Calu3 (cell line): ENCODE measurements at regions of chr19 and their contacts with region 1.

Region 1: GRCh38 chr19:51040151-51040550 is 5.3 kb upstream of the KLK12 start:
- DNase-seq: no peak
- H3K4me3 Mint-ChIP-seq: no peak overlapping the region
- H3K27ac Mint-ChIP-seq: no peak overlapping the region
- H3K4me1 Mint-ChIP-seq: peaks cover 3% of the 10 kb centered on the region
- H3K27me3 Mint-ChIP-seq: peaks cover 9% of the 10 kb centered on the region
- CTCF ChIP-seq: no peak

Region 2: GRCh38 chr19:52601025-52601973 is 1561.1 kb after region 1 on chr19:
- CTCF ChIA-PET with region 1: interaction called, 10 read pairs
- intact Hi-C with region 1: no loop called
- DNase-seq: peak; percentile 76
- H3K4me3 Mint-ChIP-seq: no peak overlapping the region
- H3K27ac Mint-ChIP-seq: no peak overlapping the region
- H3K4me1 Mint-ChIP-seq: no peaks in the 10 kb centered on the region
- H3K27me3 Mint-ChIP-seq: no peaks in the 10 kb centered on the region
- CTCF ChIP-seq: no peak